AG04449 (cell line): ENCODE measurements at regions of chr17 and their contacts with region 1.

Region 1: DNA sequence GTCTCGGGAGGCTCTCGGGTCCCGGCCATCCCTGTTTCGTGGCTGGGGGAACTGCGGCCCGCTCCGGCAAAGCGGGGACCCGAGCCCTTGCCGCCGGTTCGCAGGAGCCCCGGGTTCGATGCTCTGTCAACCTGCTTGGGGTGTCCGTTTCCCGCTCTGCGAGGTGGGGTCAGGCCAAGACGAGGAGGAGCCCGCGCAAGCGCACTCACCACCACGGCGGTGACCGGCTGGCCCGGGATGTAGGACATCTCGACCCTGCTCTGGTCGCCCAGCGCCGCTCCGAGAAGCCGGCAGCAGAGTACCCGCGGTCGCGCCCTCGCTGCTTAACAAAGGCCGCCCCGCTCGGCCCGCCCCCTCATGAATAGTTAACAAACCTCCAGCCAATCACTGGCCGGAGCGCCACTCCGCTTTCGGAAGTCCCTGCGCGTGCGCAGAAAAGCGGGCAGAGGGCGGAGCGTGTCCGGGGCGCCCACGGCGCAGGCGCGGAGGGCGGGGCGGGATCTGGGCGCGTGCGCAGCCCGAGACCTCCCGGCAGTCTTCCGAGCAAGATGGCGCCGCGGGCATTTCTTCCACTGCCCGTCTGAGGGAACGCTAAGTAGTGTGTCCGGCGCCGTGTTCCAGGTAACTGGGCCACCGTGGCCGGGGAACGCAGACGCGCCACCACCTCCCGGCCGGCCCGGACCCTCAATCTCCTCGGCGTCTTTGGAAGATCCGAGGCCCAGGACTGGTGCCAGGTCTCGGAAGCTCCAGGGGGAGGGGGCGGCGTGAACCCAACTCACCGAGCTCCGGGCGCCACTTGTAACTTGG is at the starts of genes EMC6 and TAX1BP3:
- DNase-seq: peak; percentile 73
- H3K4me3 ChIP-seq: peak within 1 kb of the TSS; percentile 99
- CTCF ChIP-seq: no peak

Region 2: GRCh38 chr17:3636154-3636907 is 32.2 kb before region 1 on chr17 and contains the starts of genes CTNS and SHPK:
- CTCF ChIA-PET with region 1: no interaction called
- POLR2A ChIA-PET with region 1: interaction called, 11 read pairs
- DNase-seq: peak; percentile 70
- H3K4me3 ChIP-seq: peak within 1 kb of the TSS; percentile 89
- CTCF ChIP-seq: no peak

Region 3: DNA sequence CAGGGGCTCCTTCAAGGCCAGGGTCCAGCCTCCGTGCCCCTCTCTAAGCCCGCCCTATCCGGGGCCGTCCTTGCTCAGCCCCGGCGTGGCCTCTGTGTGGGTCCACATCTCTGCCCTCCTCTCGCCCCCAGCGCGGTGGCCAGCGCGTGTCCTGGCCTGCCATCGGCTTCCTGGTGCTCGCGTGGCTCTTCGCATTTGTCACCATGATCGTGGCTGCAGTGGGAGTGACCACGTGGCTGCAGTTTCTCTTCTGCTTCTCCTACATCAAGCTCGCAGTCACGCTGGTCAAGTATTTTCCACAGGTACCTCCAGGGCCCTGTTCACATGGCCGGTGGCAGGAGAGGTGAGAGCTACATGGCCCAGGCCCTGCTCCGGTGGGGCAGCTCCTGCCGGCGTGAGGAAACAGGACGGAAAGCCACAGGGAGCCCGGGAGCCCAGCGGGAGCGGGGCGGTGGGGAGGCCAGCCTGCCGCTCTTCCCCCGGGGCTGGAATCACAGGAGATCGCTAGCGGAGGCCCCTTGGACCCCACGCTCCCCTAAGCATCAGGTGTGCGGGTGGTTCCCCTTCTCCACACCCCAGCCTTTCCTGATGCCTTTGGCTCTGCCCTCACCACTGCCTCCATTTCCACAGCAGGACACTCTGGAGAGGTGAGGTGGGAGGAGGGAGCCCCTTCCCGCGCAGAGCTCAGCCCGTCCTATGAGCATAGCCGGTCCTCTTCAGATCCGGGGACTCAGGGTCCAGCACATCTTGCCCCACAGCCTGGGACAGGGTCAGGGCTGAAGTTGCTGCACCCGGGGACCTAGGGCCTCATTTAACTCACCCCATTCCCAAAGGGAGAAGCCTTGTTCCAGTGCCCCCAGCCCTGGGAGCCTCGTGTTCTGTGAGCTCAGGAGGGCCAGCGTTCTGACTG is 10.4 kb before region 1 on chr17:
- CTCF ChIA-PET with region 1: no interaction called
- POLR2A ChIA-PET with region 1: interaction called, 13 read pairs
- DNase-seq: no peak
- H3K4me3 ChIP-seq: no peak overlapping the region
- CTCF ChIP-seq: no peak

Region 4: DNA sequence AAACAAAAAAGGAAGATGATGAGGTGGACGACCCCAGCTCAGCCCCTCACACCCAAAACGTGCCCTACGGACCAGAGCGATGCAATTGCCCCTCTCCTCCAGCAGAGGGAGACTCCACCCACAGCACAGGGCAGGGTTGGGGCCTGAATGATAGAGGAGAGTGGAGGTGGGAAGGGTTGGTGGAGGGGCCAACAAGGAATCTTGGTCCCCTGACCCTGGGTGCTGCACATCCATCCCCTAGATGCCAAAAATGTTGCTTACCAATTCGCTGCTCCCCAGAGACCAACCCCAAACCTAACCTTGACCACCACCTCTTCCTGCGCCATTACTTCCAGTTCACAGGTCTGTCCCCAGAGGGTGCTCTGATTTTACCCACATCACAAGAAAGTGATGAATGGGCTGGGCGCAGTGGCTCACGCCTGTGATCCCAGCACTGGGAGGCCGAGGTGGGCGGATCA is 14.6 kb after region 1 on chr17:
- CTCF ChIA-PET with region 1: interaction called, 12 read pairs
- POLR2A ChIA-PET with region 1: interaction called, 5 read pairs
- DNase-seq: no peak
- H3K4me3 ChIP-seq: no peak overlapping the region
- CTCF ChIP-seq: peak; percentile 95

Region 5: GRCh38 chr17:3754458-3755334 is 86.2 kb after region 1 on chr17:
- CTCF ChIA-PET with region 1: no interaction called
- POLR2A ChIA-PET with region 1: no interaction called
- DNase-seq: no peak
- H3K4me3 ChIP-seq: no peak overlapping the region
- CTCF ChIP-seq: no peak